HepG2 (cell line): ENCODE measurements at regions of chr17 and their contacts with region 1.

Region 1: GRCh38 chr17:48153691-48154358 is 46.3 kb downstream of the SNX11 start:
- DNase-seq: peak; percentile 68
- ATAC-seq: peak; percentile 85
- H3K4me3 ChIP-seq: no peak overlapping the region; a peak in 1 of 6 replicates
- H3K27ac ChIP-seq: no peak overlapping the region
- H3K4me1 ChIP-seq: peaks cover 11% of the 10 kb centered on the region
- H3K27me3 ChIP-seq: 0 out of 5 replicates have a peak, but pooled peaks cover 0 to 5% of the 10 kb centered on the region in 2 experiments
- CTCF ChIP-seq: peak; percentile 63
- EP300 ChIP-seq: 0 out of 4 replicates have a peak, but pooled peaks of 1 of the 2 experiments have one; percentile 18
- POLR2A ChIP-seq: no peak
- RAD21 ChIP-seq: no peak

Region 2: GRCh38 chr17:48174833-48175523 is 21.2 kb after region 1 on chr17:
- CTCF ChIA-PET with region 1: no interaction called
- POLR2A ChIA-PET with region 1: no interaction called
- in situ Hi-C with region 1: no loop called
- intact Hi-C with region 1: no loop called
- DNase-seq: no peak
- ATAC-seq: no peak
- H3K4me3 ChIP-seq: no peak overlapping the region
- H3K27ac ChIP-seq: no peak overlapping the region
- H3K4me1 ChIP-seq: no peaks in the 10 kb centered on the region
- H3K27me3 ChIP-seq: peaks cover 2 to 9% of the 10 kb centered on the region in 2 experiments; a peak in 3 of 5 replicates
- CTCF ChIP-seq: no peak
- EP300 ChIP-seq: no peak
- POLR2A ChIP-seq: no peak
- RAD21 ChIP-seq: no peak

Region 3: GRCh38 chr17:48335858-48336500 is 182.2 kb after region 1 on chr17:
- CTCF ChIA-PET with region 1: no interaction called
- POLR2A ChIA-PET with region 1: no interaction called
- in situ Hi-C with region 1: no loop called
- intact Hi-C with region 1: loop called (anchors 10 kb)
- DNase-seq: peak; percentile 42
- ATAC-seq: no peak
- H3K4me3 ChIP-seq: no peak overlapping the region
- H3K27ac ChIP-seq: no peak overlapping the region
- H3K4me1 ChIP-seq: no peaks in the 10 kb centered on the region
- H3K27me3 ChIP-seq: no peaks in the 10 kb centered on the region; a peak in 2 of 5 replicates
- CTCF ChIP-seq: peak; percentile 67
- EP300 ChIP-seq: no peak
- POLR2A ChIP-seq: no peak
- RAD21 ChIP-seq: peak; percentile 26; the same call in 1 of the 2 replicates

Region 4: DNA sequence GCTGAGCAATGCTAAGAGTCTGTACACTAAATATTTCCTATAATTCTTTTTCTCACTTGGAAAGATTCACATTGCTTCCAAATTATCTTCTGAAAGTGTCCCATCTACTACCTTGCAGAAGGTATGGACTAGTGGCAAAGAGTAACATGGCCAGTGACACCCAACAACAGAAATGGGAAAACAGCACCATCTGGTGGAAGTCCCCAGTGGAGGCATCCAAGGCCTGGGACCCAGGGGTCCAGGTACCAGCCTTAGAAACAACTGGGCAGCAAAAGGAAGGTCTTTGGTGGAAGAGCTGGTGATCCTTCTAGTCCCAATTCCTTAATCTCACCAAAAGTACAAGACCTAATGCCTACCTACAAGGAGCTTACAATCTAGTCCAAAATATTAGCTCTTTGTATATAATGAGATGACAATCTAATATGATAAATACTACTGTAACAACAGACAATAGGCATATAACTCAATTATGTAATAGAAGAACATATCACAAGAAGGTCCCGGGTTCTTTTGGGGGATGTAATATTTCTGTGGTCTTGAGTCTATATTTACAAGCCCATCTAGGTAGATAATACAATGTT is 220.9 kb after region 1 on chr17:
- CTCF ChIA-PET with region 1: interaction called, 11 read pairs
- POLR2A ChIA-PET with region 1: no interaction called
- in situ Hi-C with region 1: no loop called
- intact Hi-C with region 1: loop called (anchors 1 kb)
- DNase-seq: peak; percentile 49
- ATAC-seq: peak; percentile 93
- H3K4me3 ChIP-seq: no peak overlapping the region
- H3K27ac ChIP-seq: no peak overlapping the region
- H3K4me1 ChIP-seq: peaks cover 6% of the 10 kb centered on the region; the same call in 1 of the 2 replicates
- H3K27me3 ChIP-seq: peaks cover 0 to 6% of the 10 kb centered on the region in 2 experiments; a peak in 1 of 5 replicates
- CTCF ChIP-seq: peak; percentile 65
- EP300 ChIP-seq: no peak
- POLR2A ChIP-seq: no peak
- RAD21 ChIP-seq: peak; percentile 73

Region 5: DNA sequence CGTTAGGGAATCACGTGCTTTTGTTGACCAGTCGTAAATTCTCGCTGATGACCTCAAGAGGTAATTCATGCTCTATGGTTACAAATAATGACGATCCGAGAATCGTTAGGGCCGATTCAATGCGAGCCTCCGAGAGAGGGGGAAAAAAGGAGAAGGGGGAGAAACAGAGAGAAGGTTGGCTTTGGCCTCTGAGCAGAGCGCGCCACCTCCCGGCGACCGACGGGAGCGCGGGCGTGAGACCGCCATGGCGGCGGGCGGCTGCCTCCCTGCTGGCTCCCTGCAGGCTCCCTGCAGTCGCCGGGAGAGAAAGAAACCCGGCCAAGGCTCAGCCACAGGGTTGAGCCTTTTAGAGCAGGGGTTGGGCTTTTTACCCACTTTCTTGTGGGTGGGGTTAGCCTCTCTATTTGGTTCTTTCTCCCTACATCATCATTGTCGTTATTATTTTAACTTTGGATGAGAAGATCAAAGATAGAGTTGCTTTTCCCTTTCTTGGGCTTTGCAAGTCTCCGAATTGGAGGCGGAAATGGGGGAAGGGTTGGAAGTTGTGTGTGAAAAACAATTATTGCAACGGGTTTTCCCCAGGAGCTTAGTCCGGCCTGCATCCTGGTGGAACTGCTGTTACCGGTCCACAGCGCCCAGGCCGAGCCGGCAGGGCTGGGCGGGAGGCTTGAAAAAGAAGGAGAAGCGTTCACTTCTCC is 440.2 kb after region 1 on chr17:
- CTCF ChIA-PET with region 1: interaction called, 5 read pairs
- POLR2A ChIA-PET with region 1: interaction called, 3 read pairs
- in situ Hi-C with region 1: loop called (anchors 5 kb)
- intact Hi-C with region 1: no loop called
- DNase-seq: peak; percentile 31
- ATAC-seq: peak; percentile 81
- H3K4me3 ChIP-seq: peak overlapping the region in 1 of 3 experiments; percentile 9; a peak in 1 of 6 replicates
- H3K27ac ChIP-seq: no peak overlapping the region
- H3K4me1 ChIP-seq: 0 out of 2 replicates have a peak, but pooled peaks cover 6% of the 10 kb centered on the region
- H3K27me3 ChIP-seq: peaks cover 50 to 91% of the 10 kb centered on the region in 2 experiments
- CTCF ChIP-seq: peak; percentile 92
- EP300 ChIP-seq: no peak
- POLR2A ChIP-seq: no peak
- RAD21 ChIP-seq: peak; percentile 82

Region 6: GRCh38 chr17:48610282-48611211 is 456.7 kb after region 1 on chr17 and contains the start of gene HOXB7:
- CTCF ChIA-PET with region 1: no interaction called
- POLR2A ChIA-PET with region 1: no interaction called
- in situ Hi-C with region 1: no loop called
- intact Hi-C with region 1: loop called (anchors 2 kb)
- DNase-seq: no peak
- ATAC-seq: peak; percentile 44
- H3K4me3 ChIP-seq: peak within 1 kb of the TSS; percentile 19 to 72 (median 45); a peak in 5 of 6 replicates
- H3K27ac ChIP-seq: no peak within 1 kb of the TSS
- H3K4me1 ChIP-seq: peaks cover 23% of the 10 kb centered on the region
- H3K27me3 ChIP-seq: peaks cover 21 to 95% of the 10 kb centered on the region in 2 experiments; a peak in 4 of 5 replicates
- CTCF ChIP-seq: 0 out of 2 replicates have a peak, but pooled peaks have one; percentile 3
- EP300 ChIP-seq: no peak
- POLR2A ChIP-seq: no peak
- RAD21 ChIP-seq: no peak
- total RNA-seq, gene HOXB7: not detected in 2 replicates